Activated CD8-positive, alpha-beta T cell treated with anti-CD3 and anti-CD28 coated beads, Interleukin-2, amount 10 ng/mL, durations not matched to agents 7 days and 5 days (primary cell): ENCODE measurements at regions of chr7 and their contacts with region 1.

Region 1: GRCh38 chr7:5363729-5364128 is 59.9 kb downstream of the TNRC18 start:
- DNase-seq: no peak
- ATAC-seq: no peak
- H3K4me3 Mint-ChIP-seq: no peak overlapping the region
- H3K27ac Mint-ChIP-seq: peak overlapping the region; percentile 72
- H3K4me1 Mint-ChIP-seq: peaks cover 27% of the 10 kb centered on the region
- H3K27me3 Mint-ChIP-seq: no peaks in the 10 kb centered on the region

Region 2: DNA sequence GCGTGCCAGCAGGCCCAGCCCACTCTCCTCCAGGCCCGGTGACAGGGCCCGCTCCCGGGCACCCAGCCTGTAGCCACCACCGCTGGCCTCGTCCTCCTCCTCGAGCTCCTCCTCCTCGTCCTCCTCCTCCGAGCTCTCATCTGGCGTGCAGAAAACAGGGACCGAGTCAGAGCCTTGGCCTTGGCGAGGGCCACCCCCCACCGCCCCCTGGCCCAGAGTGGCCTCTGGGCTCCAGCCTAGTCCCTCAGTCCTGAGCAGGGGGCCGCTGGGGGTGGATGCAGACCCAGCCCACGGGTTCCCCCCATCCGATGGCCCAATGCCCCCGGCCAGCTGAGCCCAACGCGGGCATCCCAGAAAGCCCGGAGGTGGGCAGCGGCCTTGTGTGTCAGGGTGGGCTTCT is 18.1 kb before region 1 on chr7:
- CTCF ChIA-PET with region 1: no interaction called
- POLR2A ChIA-PET with region 1: no interaction called
- DNase-seq: no peak
- ATAC-seq: no peak
- H3K4me3 Mint-ChIP-seq: no peak overlapping the region
- H3K27ac Mint-ChIP-seq: no peak overlapping the region
- H3K4me1 Mint-ChIP-seq: no peaks in the 10 kb centered on the region
- H3K27me3 Mint-ChIP-seq: no peaks in the 10 kb centered on the region

Region 3: GRCh38 chr7:5417106-5418071 is 53.7 kb after region 1 on chr7:
- CTCF ChIA-PET with region 1: interaction called, 12 read pairs
- POLR2A ChIA-PET with region 1: no interaction called
- DNase-seq: no peak
- ATAC-seq: no peak
- H3K4me3 Mint-ChIP-seq: no peak overlapping the region
- H3K27ac Mint-ChIP-seq: no peak overlapping the region
- H3K4me1 Mint-ChIP-seq: peaks cover 17% of the 10 kb centered on the region
- H3K27me3 Mint-ChIP-seq: peaks cover 53% of the 10 kb centered on the region

Region 4: DNA sequence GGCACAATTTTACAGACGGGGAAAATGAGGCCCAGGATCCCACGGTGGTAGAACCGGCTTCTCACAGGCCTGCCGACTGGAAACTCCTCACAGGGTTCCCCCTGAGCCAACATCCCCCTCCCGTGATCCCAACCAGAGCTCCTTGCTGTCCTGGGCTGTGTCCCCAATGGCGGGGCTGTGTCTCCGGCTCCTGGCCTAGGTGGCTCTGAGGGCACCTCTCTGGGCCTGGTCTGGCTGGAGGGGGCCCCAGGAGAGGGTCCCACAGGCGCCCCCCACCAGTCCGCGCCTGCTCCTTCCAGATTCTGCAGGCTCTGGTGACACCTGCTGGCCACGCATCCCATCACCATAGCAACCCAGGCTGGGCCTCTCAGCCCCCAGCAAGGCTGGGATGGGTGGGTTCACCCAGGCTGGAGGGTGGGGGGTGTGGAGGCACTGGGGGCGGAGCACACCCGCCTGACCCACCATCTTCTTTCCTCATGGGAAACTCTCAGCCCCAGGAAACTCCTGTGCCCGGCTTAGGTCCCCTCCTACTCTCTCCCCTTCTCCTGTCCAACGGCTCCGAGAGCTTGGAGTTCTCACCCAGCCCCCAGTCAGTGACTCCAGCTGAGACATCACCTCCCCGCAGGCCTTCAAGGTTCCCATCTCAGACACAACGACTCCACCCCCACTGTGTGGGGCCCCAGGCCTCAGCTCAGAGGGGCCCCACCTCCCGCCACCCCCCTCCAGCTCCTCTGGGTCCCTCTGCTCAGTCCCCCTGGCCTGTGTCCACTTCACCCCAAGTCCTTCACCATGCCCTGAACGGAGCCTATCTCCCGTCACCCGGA is 87.0 kb after region 1 on chr7:
- CTCF ChIA-PET with region 1: interaction called, 10 read pairs
- POLR2A ChIA-PET with region 1: no interaction called
- DNase-seq: peak; percentile 53
- ATAC-seq: peak; percentile 68
- H3K4me3 Mint-ChIP-seq: no peak overlapping the region
- H3K27ac Mint-ChIP-seq: no peak overlapping the region
- H3K4me1 Mint-ChIP-seq: peaks cover 3% of the 10 kb centered on the region
- H3K27me3 Mint-ChIP-seq: peaks cover 4% of the 10 kb centered on the region